ENCODE measurements at regions of chr2 and their contacts with region 1.

Region 1: GRCh38 chr2:197184959-197185586 is 125.5 kb downstream of the ANKRD44 start:
- DNase-seq: peak; percentile 54 to 90
- H3K4me3 ChIP-seq: no peak overlapping the region
- H3K27ac ChIP-seq: peak overlapping the region; percentile 5 to 37
- H3K4me1 ChIP-seq: peaks cover 0 to 26% (median 3%) of the 10 kb centered on the region in 4 donors
- H3K27me3 ChIP-seq: no peaks in the 10 kb centered on the region
- CTCF ChIP-seq: no peak

Region 2: DNA sequence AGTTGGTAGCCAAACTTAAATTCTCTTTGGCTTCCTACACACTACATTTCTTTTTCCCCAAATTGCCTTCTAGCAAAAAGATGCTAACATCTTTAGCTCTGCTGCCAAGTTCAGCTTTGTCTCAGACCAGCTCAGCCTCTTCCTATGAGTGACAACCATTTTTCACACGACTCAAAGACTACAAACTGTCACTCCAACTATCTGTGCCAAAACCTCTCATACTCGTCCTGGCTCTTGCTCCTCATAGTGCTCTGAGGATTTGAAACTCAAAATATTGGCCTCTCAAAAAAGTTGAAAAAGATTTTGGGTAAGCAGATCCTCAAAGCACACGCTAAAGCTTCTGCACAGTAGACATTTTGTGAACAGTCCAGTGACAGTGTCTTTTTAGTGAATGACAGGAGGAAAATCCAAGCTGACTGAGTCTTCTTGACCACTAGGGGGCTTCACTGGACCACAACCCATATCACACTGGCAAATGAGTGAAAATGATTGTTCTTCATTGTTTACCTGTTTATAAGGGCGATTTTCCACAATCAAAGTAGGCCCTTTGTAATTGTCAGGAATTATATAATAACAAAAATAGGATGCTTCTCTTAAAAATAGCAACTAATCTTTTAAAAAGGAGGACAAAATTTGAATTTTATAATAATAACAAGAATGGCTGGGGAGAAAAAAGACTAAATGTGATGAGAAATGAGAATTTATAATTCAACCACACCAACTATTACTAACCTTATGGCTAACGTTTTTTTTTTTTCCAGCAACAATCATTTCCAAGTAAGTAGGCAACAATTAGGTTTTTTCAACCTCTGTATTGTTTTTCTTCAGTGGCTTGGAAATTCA is 173.1 kb before region 1 on chr2:
- intact Hi-C with region 1: loop called (anchors 10 kb)
- DNase-seq: no peak
- H3K4me3 ChIP-seq: no peak overlapping the region
- H3K27ac ChIP-seq: no peak overlapping the region
- H3K4me1 ChIP-seq: no peaks in the 10 kb centered on the region
- H3K27me3 ChIP-seq: no peaks in the 10 kb centered on the region
- CTCF ChIP-seq: peak; percentile 67 to 71

Measured in tibial artery (tissue), 4 donors.